Activated CD4-positive, alpha-beta memory T cell treated with anti-CD3 and anti-CD28 coated beads, Interleukin-2, amount 10 ng/mL, durations not matched to agents 7 days and 5 days (primary cell): ENCODE measurements at regions of chr9 and their contacts with region 1.

Region 1: GRCh38 chr9:100322954-100323536 is 29.7 kb downstream of the TEX10 start:
- DNase-seq: peak; percentile 29
- H3K4me3 Mint-ChIP-seq: no peak overlapping the region
- H3K27ac Mint-ChIP-seq: no peak overlapping the region
- H3K4me1 Mint-ChIP-seq: peaks cover 1% of the 10 kb centered on the region
- H3K27me3 Mint-ChIP-seq: no peaks in the 10 kb centered on the region

Region 2: DNA sequence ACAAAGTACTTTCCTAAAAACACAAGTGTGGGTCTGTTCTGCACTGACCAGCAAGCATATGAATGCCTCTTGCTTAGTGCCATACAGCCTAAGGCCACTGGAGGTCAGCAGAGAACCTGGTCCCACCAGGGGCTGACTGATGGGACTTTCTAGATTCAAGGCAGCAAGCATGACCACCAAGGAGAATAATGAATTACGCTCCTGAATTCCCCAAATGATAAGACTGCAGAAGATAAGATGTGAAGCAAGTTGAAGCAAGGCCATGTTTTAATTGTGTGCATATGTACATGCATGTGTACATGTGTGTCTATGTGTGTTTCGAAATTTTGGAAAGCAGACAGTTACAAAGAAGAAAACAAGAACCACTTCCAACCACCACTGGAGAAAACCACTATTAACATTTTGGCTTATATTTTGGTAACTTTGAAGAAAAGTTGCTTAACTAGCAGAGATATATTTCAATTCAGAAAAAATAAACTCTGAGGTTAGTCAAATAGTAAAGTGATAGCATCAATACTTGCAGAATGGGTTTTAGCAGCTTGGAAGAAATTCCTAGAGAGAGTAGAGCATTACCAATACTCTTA is 294.8 kb before region 1 on chr9:
- CTCF ChIA-PET with region 1: interaction called, 12 read pairs
- POLR2A ChIA-PET with region 1: no interaction called
- DNase-seq: peak; percentile 73
- H3K4me3 Mint-ChIP-seq: no peak overlapping the region
- H3K27ac Mint-ChIP-seq: no peak overlapping the region
- H3K4me1 Mint-ChIP-seq: peaks cover 12% of the 10 kb centered on the region
- H3K27me3 Mint-ChIP-seq: no peaks in the 10 kb centered on the region

Region 3: GRCh38 chr9:100670719-100671118 is 347.7 kb after region 1 on chr9:
- CTCF ChIA-PET with region 1: no interaction called
- POLR2A ChIA-PET with region 1: no interaction called
- DNase-seq: no peak
- H3K4me3 Mint-ChIP-seq: no peak overlapping the region
- H3K27ac Mint-ChIP-seq: no peak overlapping the region
- H3K4me1 Mint-ChIP-seq: no peaks in the 10 kb centered on the region
- H3K27me3 Mint-ChIP-seq: peaks cover 1% of the 10 kb centered on the region